Posterior vena cava (tissue), 2 donors: ENCODE measurements at regions of chr18 and their contacts with region 1.

Region 1: DNA sequence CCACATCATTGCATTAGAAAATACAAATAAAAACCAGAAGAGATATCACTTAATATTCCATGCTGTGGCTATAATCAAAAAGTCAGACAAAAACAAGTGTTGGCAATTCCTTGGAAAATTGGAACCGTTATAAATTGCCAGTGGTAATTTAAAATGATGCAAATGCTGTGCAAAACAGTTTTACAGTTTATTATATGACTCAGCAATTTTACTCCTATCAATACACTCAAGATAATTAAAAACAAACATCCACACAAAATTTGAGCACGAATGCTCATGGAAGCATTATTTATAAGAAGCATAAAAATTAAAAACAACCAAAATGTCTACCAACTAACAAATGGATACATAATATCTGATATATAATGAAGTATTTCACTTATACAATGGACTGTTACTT is 728.8 kb downstream of the CBLN2 start:
- DNase-seq: no peak

Region 2: GRCh38 chr18:70469916-70470315 is 1345.4 kb before region 1 on chr18:
- intact Hi-C with region 1: no loop called
- DNase-seq: no peak

Region 3: GRCh38 chr18:71798986-71799673 is 16.2 kb before region 1 on chr18:
- intact Hi-C with region 1: loop called in 1 of 2 experiments (anchors 1 kb)
- DNase-seq: no peak

Region 4: GRCh38 chr18:71844814-71845213 is 29.5 kb after region 1 on chr18:
- intact Hi-C with region 1: loop called in 1 of 2 experiments (anchors 2 kb)
- DNase-seq: no peak

Region 5: GRCh38 chr18:72201032-72201431 is 385.7 kb after region 1 on chr18:
- intact Hi-C with region 1: no loop called
- DNase-seq: no peak